CD4-positive, alpha-beta T cell (primary cell): ENCODE measurements at regions of chr4 and their contacts with region 1.

Region 1: GRCh38 chr4:102760645-102761295 is at the start of gene MANBA:
- DNase-seq: peak; percentile 66 to 92 (median 81)
- ATAC-seq: peak; percentile 83
- H3K4me3 ChIP-seq: peak within 1 kb of the TSS; percentile 84
- H3K4me3 Mint-ChIP-seq: peak within 1 kb of the TSS; percentile 95
- H3K27ac ChIP-seq: peak within 1 kb of the TSS; percentile 51 to 67
- H3K27ac Mint-ChIP-seq: peak within 1 kb of the TSS; percentile 88
- H3K4me1 ChIP-seq: peaks cover 16% of the 10 kb centered on the region
- H3K4me1 Mint-ChIP-seq: peaks cover 48% of the 10 kb centered on the region
- H3K27me3 ChIP-seq: no peaks in the 10 kb centered on the region
- H3K27me3 Mint-ChIP-seq: no peaks in the 10 kb centered on the region
- CTCF ChIP-seq: no peak
- total RNA-seq, gene MANBA: 16.9 to 18.2 TPM

Region 2: GRCh38 chr4:102723511-102723910 is 37.3 kb before region 1 on chr4:
- CTCF ChIA-PET with region 1: no interaction called
- POLR2A ChIA-PET with region 1: no interaction called
- intact Hi-C with region 1: no loop called
- DNase-seq: no peak
- ATAC-seq: no peak
- H3K4me3 ChIP-seq: no peak overlapping the region
- H3K4me3 Mint-ChIP-seq: no peak overlapping the region
- H3K27ac ChIP-seq: no peak overlapping the region
- H3K27ac Mint-ChIP-seq: no peak overlapping the region
- H3K4me1 ChIP-seq: no peaks in the 10 kb centered on the region
- H3K4me1 Mint-ChIP-seq: no peaks in the 10 kb centered on the region
- H3K27me3 ChIP-seq: no peaks in the 10 kb centered on the region
- H3K27me3 Mint-ChIP-seq: no peaks in the 10 kb centered on the region
- CTCF ChIP-seq: no peak

Region 3: GRCh38 chr4:102789317-102789717 is 28.5 kb after region 1 on chr4:
- CTCF ChIA-PET with region 1: no interaction called
- POLR2A ChIA-PET with region 1: interaction called, 12 read pairs
- intact Hi-C with region 1: no loop called
- DNase-seq: no peak
- ATAC-seq: no peak
- H3K4me3 ChIP-seq: no peak overlapping the region
- H3K4me3 Mint-ChIP-seq: no peak overlapping the region
- H3K27ac ChIP-seq: no peak overlapping the region
- H3K27ac Mint-ChIP-seq: no peak overlapping the region
- H3K4me1 ChIP-seq: no peaks in the 10 kb centered on the region
- H3K4me1 Mint-ChIP-seq: peaks cover 5% of the 10 kb centered on the region
- H3K27me3 ChIP-seq: no peaks in the 10 kb centered on the region
- H3K27me3 Mint-ChIP-seq: no peaks in the 10 kb centered on the region
- CTCF ChIP-seq: no peak

Region 4: DNA sequence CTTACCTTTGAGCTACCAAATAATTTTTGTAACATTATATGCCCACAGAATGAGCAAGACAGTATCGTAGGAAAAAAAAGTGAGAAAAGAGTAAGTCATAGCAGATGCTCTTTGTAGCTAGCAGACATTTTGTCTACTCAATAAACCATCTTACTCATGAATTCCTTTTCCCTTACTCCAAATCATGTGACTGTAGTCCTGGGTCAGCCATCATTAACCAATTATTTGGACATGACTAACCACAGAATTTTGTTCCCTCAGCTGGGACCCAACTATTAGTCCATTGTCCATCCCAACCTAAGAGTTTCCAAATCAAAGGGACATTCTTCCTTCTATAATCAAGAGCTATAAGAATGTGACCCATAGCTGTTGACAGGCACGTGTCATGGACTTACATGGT is 55.2 kb after region 1 on chr4:
- CTCF ChIA-PET with region 1: no interaction called
- POLR2A ChIA-PET with region 1: interaction called, 12 read pairs
- intact Hi-C with region 1: no loop called
- DNase-seq: no peak
- ATAC-seq: no peak
- H3K4me3 ChIP-seq: no peak overlapping the region
- H3K4me3 Mint-ChIP-seq: peak overlapping the region; percentile 78
- H3K27ac ChIP-seq: peak overlapping the region in 1 of 2 donors; percentile 1
- H3K27ac Mint-ChIP-seq: peak overlapping the region; percentile 78
- H3K4me1 ChIP-seq: peaks cover 47% of the 10 kb centered on the region
- H3K4me1 Mint-ChIP-seq: peaks cover 92% of the 10 kb centered on the region
- H3K27me3 ChIP-seq: no peaks in the 10 kb centered on the region
- H3K27me3 Mint-ChIP-seq: no peaks in the 10 kb centered on the region
- CTCF ChIP-seq: no peak

Region 5: GRCh38 chr4:103019308-103020124 is 258.7 kb after region 1 on chr4 and contains the start of gene SLC9B1:
- CTCF ChIA-PET with region 1: no interaction called
- POLR2A ChIA-PET with region 1: interaction called, 3 read pairs
- intact Hi-C with region 1: loop called in 1 of 2 experiments (anchors 5 kb)
- DNase-seq: peak; percentile 84 to 96 (median 91)
- ATAC-seq: peak; percentile 89
- H3K4me3 ChIP-seq: peak within 1 kb of the TSS; percentile 64
- H3K4me3 Mint-ChIP-seq: peak within 1 kb of the TSS; percentile 91
- H3K27ac ChIP-seq: peak within 1 kb of the TSS; percentile 65 to 94
- H3K27ac Mint-ChIP-seq: peak within 1 kb of the TSS; percentile 99
- H3K4me1 ChIP-seq: peaks cover 22% of the 10 kb centered on the region
- H3K4me1 Mint-ChIP-seq: peaks cover 25% of the 10 kb centered on the region
- H3K27me3 ChIP-seq: no peaks in the 10 kb centered on the region
- H3K27me3 Mint-ChIP-seq: no peaks in the 10 kb centered on the region
- CTCF ChIP-seq: no peak
- total RNA-seq, gene SLC9B1: 3.6 to 3.7 TPM

Region 6: GRCh38 chr4:103075901-103076739 is 315.4 kb after region 1 on chr4:
- CTCF ChIA-PET with region 1: no interaction called
- POLR2A ChIA-PET with region 1: interaction called, 10 read pairs
- intact Hi-C with region 1: no loop called
- DNase-seq: peak; percentile 43 to 80 (median 58)
- ATAC-seq: peak; percentile 81
- H3K4me3 ChIP-seq: peak overlapping the region; percentile 81
- H3K4me3 Mint-ChIP-seq: peak overlapping the region; percentile 88
- H3K27ac ChIP-seq: peak overlapping the region; percentile 78 to 88
- H3K27ac Mint-ChIP-seq: peak overlapping the region; percentile 94
- H3K4me1 ChIP-seq: peaks cover 17% of the 10 kb centered on the region
- H3K4me1 Mint-ChIP-seq: peaks cover 59% of the 10 kb centered on the region
- H3K27me3 ChIP-seq: no peaks in the 10 kb centered on the region
- H3K27me3 Mint-ChIP-seq: no peaks in the 10 kb centered on the region
- CTCF ChIP-seq: no peak